CD8-positive, alpha-beta T cell (primary cell): ENCODE measurements at regions of chr3 and their contacts with region 1.

Region 1: DNA sequence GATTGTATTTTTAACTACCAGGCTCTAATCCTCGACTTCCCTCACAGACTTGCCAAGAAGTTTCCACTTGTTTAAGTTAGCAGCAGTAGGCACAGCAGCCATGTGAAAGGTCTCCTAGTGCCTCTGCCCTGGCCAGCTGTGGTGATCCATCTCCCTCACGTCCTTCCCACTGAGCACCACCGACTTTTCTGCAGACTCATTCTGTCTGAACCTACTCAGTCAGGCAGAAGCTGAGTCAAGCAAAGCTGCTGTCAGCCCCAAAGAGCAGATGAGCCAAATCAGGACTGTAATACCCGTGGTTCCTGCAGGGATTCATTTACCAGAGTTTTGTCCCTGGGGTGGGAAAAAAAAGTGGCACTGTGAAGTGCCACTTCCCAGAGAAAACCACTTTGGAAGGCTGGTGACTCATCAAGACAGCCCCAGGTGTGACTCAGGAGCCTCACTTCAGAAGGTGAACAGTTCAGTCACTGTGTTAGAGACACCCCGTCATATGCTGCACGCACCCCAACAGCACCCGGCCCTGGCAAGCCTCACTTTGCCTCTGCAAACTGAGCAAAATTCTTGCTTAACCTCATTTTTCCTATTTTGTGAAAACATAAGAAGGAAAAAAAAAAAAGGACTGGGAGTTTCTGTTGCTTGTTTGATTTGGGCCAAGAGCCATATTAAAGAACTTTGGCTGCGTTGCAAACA is 76.0 kb downstream of the WWTR1 start:
- DNase-seq: peak in 1 of 9 experiments; percentile 2
- ATAC-seq: no peak
- H3K4me3 ChIP-seq: no peak overlapping the region
- H3K4me3 Mint-ChIP-seq: no peak overlapping the region
- H3K27ac ChIP-seq: no peak overlapping the region
- H3K27ac Mint-ChIP-seq: no peak overlapping the region
- H3K4me1 ChIP-seq: no peaks in the 10 kb centered on the region
- H3K4me1 Mint-ChIP-seq: peaks cover 8% of the 10 kb centered on the region
- H3K27me3 ChIP-seq: peaks cover 0 to 2% of the 10 kb centered on the region in 2 experiments
- H3K27me3 Mint-ChIP-seq: peaks cover 4% of the 10 kb centered on the region
- CTCF ChIP-seq: no peak

Region 2: GRCh38 chr3:149596136-149596770 is 14.4 kb after region 1 on chr3:
- CTCF ChIA-PET with region 1: no interaction called
- POLR2A ChIA-PET with region 1: no interaction called
- intact Hi-C with region 1: no loop called
- DNase-seq: no peak
- ATAC-seq: no peak
- H3K4me3 ChIP-seq: no peak overlapping the region
- H3K4me3 Mint-ChIP-seq: no peak overlapping the region
- H3K27ac ChIP-seq: no peak overlapping the region
- H3K27ac Mint-ChIP-seq: no peak overlapping the region
- H3K4me1 ChIP-seq: no peaks in the 10 kb centered on the region
- H3K4me1 Mint-ChIP-seq: no peaks in the 10 kb centered on the region
- H3K27me3 ChIP-seq: no peaks in the 10 kb centered on the region
- H3K27me3 Mint-ChIP-seq: peaks cover 3% of the 10 kb centered on the region
- CTCF ChIP-seq: no peak

Region 3: DNA sequence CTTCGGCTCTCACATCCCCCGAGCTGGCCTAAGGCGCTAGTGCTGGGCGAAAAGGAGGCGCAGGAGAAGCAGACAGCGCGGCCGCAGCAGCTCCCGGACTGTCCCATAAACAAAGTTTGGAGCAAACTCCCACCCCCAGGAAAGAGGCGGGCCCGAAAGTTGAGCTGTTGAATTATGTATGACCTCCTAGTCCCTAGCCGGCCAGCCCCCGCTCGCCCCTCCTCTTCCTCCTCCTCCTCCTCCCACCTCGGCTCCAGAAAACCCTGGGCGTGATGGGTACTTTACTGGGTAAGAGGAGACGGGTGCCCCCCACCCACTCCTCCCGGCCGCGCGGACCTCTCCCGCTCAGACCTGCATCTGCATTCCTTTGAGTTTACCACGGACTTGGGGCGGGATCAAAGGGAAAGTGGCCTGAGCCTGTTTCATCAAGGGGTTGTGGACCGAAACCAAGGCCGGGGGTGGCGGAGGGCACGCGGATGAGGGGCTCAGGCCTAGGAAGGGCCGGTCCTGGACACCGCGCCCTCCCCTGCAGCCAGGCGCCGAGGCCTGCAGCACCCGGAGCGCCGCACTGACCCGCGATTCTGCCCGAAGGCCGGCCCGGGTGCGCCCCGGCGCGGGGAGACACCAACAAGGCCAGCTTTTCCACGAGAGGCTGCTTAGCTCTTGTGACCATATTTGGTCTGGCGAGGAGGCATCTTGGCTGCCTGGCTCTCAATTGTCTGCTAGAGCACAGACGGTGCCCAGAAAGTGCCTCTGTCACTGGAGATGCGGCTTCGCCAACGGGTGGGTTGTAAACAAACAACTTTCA is 76.3 kb after region 1 on chr3 and contains the start of gene WWTR1:
- CTCF ChIA-PET with region 1: no interaction called
- POLR2A ChIA-PET with region 1: no interaction called
- intact Hi-C with region 1: loop called in 1 of 2 experiments (anchors 10 kb)
- DNase-seq: peak in 6 of 9 experiments; percentile 14 to 54 (median 20)
- ATAC-seq: peak; percentile 70
- H3K4me3 ChIP-seq: peak within 1 kb of the TSS; percentile 55 to 66
- H3K4me3 Mint-ChIP-seq: peak within 1 kb of the TSS; percentile 81
- H3K27ac ChIP-seq: no peak within 1 kb of the TSS
- H3K27ac Mint-ChIP-seq: peak within 1 kb of the TSS; percentile 55
- H3K4me1 ChIP-seq: peaks cover 4% of the 10 kb centered on the region
- H3K4me1 Mint-ChIP-seq: peaks cover 18% of the 10 kb centered on the region
- H3K27me3 ChIP-seq: peaks cover 3 to 4% of the 10 kb centered on the region in 2 experiments
- H3K27me3 Mint-ChIP-seq: peaks cover 49% of the 10 kb centered on the region
- CTCF ChIP-seq: no peak
- total RNA-seq, gene WWTR1: 0.11 to 0.25 TPM